Activated CD4-positive, alpha-beta memory T cell treated with anti-CD3 and anti-CD28 coated beads for 36 hours (primary cell): ENCODE measurements at regions of chr9 and their contacts with region 1.

Region 1: GRCh38 chr9:70406434-70406862 is 8.0 kb downstream of the KLF9 start:
- DNase-seq: peak; percentile 69
- H3K4me3 Mint-ChIP-seq: peak overlapping the region; percentile 73
- H3K27ac Mint-ChIP-seq: peak overlapping the region; percentile 92
- H3K4me1 Mint-ChIP-seq: peaks cover 79% of the 10 kb centered on the region
- H3K27me3 Mint-ChIP-seq: no peaks in the 10 kb centered on the region

Region 2: DNA sequence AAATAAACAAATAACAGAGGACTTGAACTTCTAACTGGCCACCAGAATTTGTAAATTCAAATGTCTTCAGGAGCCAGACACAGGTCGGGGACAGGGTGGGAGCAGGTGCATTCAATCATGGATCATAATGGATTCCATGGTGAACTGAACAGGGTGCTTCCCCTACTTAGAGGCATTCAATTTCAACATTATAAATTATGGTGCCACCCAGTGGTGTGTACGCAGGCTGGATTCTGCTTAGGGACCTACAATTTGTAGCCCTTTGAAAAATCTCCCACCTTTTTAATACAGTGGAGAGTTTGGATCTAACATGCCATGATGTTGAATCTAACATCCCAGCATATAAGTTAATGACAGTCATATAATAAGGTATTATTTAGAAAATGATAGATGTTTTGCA is 14.3 kb before region 1 on chr9:
- CTCF ChIA-PET with region 1: interaction called, 14 read pairs
- POLR2A ChIA-PET with region 1: interaction called, 7 read pairs
- intact Hi-C with region 1: no loop called
- DNase-seq: no peak
- H3K4me3 Mint-ChIP-seq: no peak overlapping the region
- H3K27ac Mint-ChIP-seq: no peak overlapping the region
- H3K4me1 Mint-ChIP-seq: peaks cover 78% of the 10 kb centered on the region
- H3K27me3 Mint-ChIP-seq: no peaks in the 10 kb centered on the region

Region 3: GRCh38 chr9:70701163-70701562 is 294.7 kb after region 1 on chr9:
- CTCF ChIA-PET with region 1: no interaction called
- POLR2A ChIA-PET with region 1: no interaction called
- intact Hi-C with region 1: no loop called
- DNase-seq: no peak
- H3K4me3 Mint-ChIP-seq: no peak overlapping the region
- H3K27ac Mint-ChIP-seq: no peak overlapping the region
- H3K4me1 Mint-ChIP-seq: no peaks in the 10 kb centered on the region
- H3K27me3 Mint-ChIP-seq: no peaks in the 10 kb centered on the region